HepG2 (cell line): ENCODE measurements at regions of chr22 and their contacts with region 1.

Region 1: GRCh38 chr22:26318975-26319374 is 110.1 kb upstream of the ASPHD2 start:
- DNase-seq: peak; percentile 13
- ATAC-seq: peak; percentile 80
- H3K4me3 ChIP-seq: no peak overlapping the region
- H3K27ac ChIP-seq: no peak overlapping the region
- H3K4me1 ChIP-seq: no peaks in the 10 kb centered on the region
- H3K27me3 ChIP-seq: peaks cover 0 to 7% of the 10 kb centered on the region in 2 experiments; a peak in 1 of 5 replicates
- CTCF ChIP-seq: peak; percentile 64
- EP300 ChIP-seq: no peak
- POLR2A ChIP-seq: no peak
- RAD21 ChIP-seq: no peak

Region 2: DNA sequence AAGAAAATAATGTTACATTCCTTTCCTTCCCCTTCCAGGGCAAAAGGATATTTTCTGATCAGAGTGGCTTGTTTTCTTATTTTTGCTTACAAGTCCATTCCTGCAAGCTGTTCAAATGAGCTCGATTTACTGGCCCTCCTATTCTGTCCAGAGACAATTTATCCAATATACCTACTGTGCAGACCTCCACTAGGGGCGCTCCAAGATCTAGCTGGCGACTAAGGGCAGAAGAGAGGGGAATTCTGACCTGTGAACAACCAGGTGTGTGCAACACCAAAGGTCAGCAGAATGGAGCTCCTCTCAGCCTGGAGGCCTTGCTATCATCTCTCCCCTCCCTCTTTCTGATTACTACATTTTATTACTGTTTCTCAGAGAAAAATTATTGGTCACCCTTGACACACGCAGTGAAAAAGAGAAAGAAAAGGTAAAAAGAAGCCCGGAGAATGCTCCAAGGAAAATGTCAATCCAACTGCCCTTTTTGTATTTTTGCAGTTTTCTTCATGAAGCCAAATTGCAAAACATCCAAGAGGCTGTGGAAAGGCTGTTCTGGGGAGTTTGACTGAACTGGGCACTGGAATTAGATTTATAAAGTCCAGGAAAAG is 146.5 kb before region 1 on chr22:
- CTCF ChIA-PET with region 1: interaction called, 5 read pairs
- POLR2A ChIA-PET with region 1: no interaction called
- in situ Hi-C with region 1: loop called (anchors 5 kb)
- intact Hi-C with region 1: loop called (anchors 5 kb)
- DNase-seq: peak; percentile 53
- ATAC-seq: peak; percentile 84
- H3K4me3 ChIP-seq: no peak overlapping the region
- H3K27ac ChIP-seq: no peak overlapping the region
- H3K4me1 ChIP-seq: no peaks in the 10 kb centered on the region
- H3K27me3 ChIP-seq: peaks cover 4 to 27% of the 10 kb centered on the region in 2 experiments; a peak in 4 of 5 replicates
- CTCF ChIP-seq: peak; percentile 72
- EP300 ChIP-seq: no peak
- POLR2A ChIP-seq: no peak
- RAD21 ChIP-seq: peak; percentile 53

Region 3: DNA sequence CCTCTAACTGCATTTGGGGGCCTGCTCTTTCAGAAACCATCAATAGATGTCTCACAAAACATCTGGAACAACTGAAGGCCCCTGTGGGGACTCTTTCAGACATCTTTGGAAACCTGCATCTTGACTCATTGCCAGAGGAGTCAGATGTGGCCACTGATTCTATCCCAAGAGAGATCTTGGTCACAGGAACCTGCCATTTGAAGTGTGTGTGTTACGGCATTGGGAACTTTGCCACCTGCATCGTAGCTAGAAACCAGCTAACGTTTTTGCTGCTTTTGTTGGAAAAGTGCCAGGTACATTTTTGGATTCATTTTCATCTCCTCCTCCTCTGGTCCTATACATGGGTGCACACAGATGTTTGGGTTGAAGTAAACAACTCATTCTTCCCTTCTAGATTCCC is 169.0 kb after region 1 on chr22:
- CTCF ChIA-PET with region 1: no interaction called
- POLR2A ChIA-PET with region 1: no interaction called
- in situ Hi-C with region 1: no loop called
- intact Hi-C with region 1: no loop called
- DNase-seq: no peak
- ATAC-seq: no peak
- H3K4me3 ChIP-seq: no peak overlapping the region
- H3K27ac ChIP-seq: no peak overlapping the region
- H3K4me1 ChIP-seq: peaks cover 49% of the 10 kb centered on the region
- H3K27me3 ChIP-seq: no peaks in the 10 kb centered on the region; a peak in 1 of 5 replicates
- CTCF ChIP-seq: no peak
- EP300 ChIP-seq: no peak
- POLR2A ChIP-seq: no peak
- RAD21 ChIP-seq: no peak